GM18951 (cell line): ENCODE measurements at regions of chr3 and their contacts with region 1.

Region 1: DNA sequence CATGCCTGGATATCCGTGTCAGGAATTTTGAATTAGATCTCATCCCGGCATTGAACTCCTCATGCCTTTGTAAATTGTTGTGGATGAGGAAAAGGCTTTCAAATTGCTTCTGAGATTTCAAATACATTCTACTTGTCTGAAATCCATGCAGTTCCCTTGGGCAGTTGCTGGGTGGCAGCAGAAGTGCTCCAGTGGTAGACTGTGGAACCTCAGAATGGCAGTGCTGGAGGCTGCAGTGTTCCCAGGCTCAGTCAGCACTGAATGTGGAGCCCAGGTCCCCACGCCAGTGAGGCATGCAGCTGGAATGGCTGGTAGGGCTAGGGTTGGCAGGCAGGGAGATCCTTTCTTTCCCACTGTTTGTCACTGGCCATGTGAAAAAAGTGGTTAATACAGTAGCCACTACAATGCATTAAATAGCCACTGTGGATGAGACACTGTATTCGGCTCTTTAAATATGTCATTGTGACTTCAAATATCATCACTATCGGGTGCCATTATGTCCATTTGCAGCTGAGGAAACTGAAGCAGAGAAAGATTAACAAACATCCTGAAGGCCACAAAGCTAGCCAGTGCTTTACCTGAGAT is 98.6 kb downstream of the TPRG1 start:
- POLR2A ChIP-seq: no peak

Region 2: DNA sequence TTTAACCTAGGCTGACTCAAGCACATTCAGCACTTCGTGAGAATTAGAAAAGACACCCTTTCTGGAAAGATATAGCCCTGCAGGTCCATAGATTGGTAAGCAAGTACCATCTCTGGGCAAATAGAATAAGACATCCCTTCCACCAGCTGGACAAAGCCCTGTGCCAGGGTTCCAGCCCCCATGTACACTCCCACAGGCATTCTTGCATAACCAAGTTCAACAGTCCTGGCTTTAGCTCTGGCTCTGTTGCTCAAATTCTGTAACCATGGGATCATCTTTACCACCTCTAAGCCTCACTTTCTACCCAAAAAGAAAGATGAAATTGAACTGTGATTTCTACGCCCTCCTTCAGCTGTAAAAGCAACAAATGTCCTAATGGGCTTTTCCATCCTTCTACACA is 684.4 kb after region 1 on chr3:
- in situ Hi-C with region 1: loop called (anchors 5 kb)
- POLR2A ChIP-seq: no peak